ENCODE measurements at regions of chr3 and their contacts with region 1.

Region 1: GRCh38 chr3:97793420-97794019 is 28.3 kb upstream of the CRYBG3 start:
- DNase-seq: no peak
- ATAC-seq: peak in 3 of 4 donors; percentile 49 to 76 (median 60)
- H3K4me3 ChIP-seq: no peak overlapping the region
- H3K27ac ChIP-seq: no peak overlapping the region
- H3K4me1 ChIP-seq: no peaks in the 10 kb centered on the region
- H3K27me3 ChIP-seq: no peaks in the 10 kb centered on the region
- CTCF ChIP-seq: peak; percentile 89

Region 2: GRCh38 chr3:97764407-97765238 is 28.9 kb before region 1 on chr3 and contains the start of gene ARL6:
- intact Hi-C with region 1: no loop called
- DNase-seq: peak; percentile 82 to 90
- ATAC-seq: peak; percentile 95 to 99 (median 98)
- H3K4me3 ChIP-seq: peak within 1 kb of the TSS; percentile 89
- H3K27ac ChIP-seq: peak within 1 kb of the TSS; percentile 81
- H3K4me1 ChIP-seq: peaks cover 5% of the 10 kb centered on the region
- H3K27me3 ChIP-seq: no peaks in the 10 kb centered on the region
- CTCF ChIP-seq: no peak
- total RNA-seq, gene ARL6: 1.3 to 2.5 (median 1.7) TPM

Region 3: GRCh38 chr3:97932387-97932801 is 138.9 kb after region 1 on chr3:
- intact Hi-C with region 1: loop called in 1 of 2 experiments (anchors 10 kb)
- DNase-seq: no peak
- ATAC-seq: peak in 3 of 4 donors; percentile 15 to 30 (median 27)
- H3K4me3 ChIP-seq: no peak overlapping the region
- H3K27ac ChIP-seq: no peak overlapping the region
- H3K4me1 ChIP-seq: peaks cover 19% of the 10 kb centered on the region
- H3K27me3 ChIP-seq: no peaks in the 10 kb centered on the region
- CTCF ChIP-seq: no peak

Region 4: GRCh38 chr3:98003306-98003969 is 209.9 kb after region 1 on chr3:
- intact Hi-C with region 1: no loop called
- DNase-seq: no peak
- ATAC-seq: no peak
- H3K4me3 ChIP-seq: no peak overlapping the region
- H3K27ac ChIP-seq: no peak overlapping the region
- H3K4me1 ChIP-seq: no peaks in the 10 kb centered on the region
- H3K27me3 ChIP-seq: no peaks in the 10 kb centered on the region
- CTCF ChIP-seq: no peak

Region 5: GRCh38 chr3:98022978-98023820 is 229.7 kb after region 1 on chr3:
- intact Hi-C with region 1: loop called (anchors 1 to 2 kb)
- DNase-seq: peak; percentile 90 to 93
- ATAC-seq: peak; percentile 75 to 92 (median 83)
- H3K4me3 ChIP-seq: no peak overlapping the region
- H3K27ac ChIP-seq: no peak overlapping the region
- H3K4me1 ChIP-seq: peaks cover 14% of the 10 kb centered on the region
- H3K27me3 ChIP-seq: no peaks in the 10 kb centered on the region
- CTCF ChIP-seq: peak; percentile 99

Region 6: GRCh38 chr3:98154686-98155085 is 361.2 kb after region 1 on chr3:
- intact Hi-C with region 1: no loop called
- DNase-seq: no peak
- ATAC-seq: no peak
- H3K4me3 ChIP-seq: no peak overlapping the region
- H3K27ac ChIP-seq: no peak overlapping the region
- H3K4me1 ChIP-seq: no peaks in the 10 kb centered on the region
- H3K27me3 ChIP-seq: no peaks in the 10 kb centered on the region
- CTCF ChIP-seq: no peak